HEK293 (cell line): ENCODE measurements at regions of chr3 and their contacts with region 1.

Region 1: GRCh38 chr3:77254967-77255831 is 215.3 kb downstream of the ROBO2 start:
- H3K4me3 ChIP-seq: no peak overlapping the region
- H3K27ac ChIP-seq: no peak overlapping the region
- H3K4me1 ChIP-seq: peaks cover 6% of the 10 kb centered on the region; the same call in 1 of the 2 replicates
- CTCF ChIP-seq: 0 out of 2 replicates have a peak, but pooled peaks have one; percentile 15

Region 2: GRCh38 chr3:77038468-77038929 is 216.7 kb before region 1 on chr3:
- CTCF ChIA-PET with region 1: interaction called, 16 read pairs
- POLR2A ChIA-PET with region 1: no interaction called
- H3K4me3 ChIP-seq: peak overlapping the region; percentile 55
- H3K27ac ChIP-seq: peak overlapping the region; percentile 93
- H3K4me1 ChIP-seq: no peaks in the 10 kb centered on the region
- CTCF ChIP-seq: peak; percentile 55; the same call in 1 of the 2 replicates

Region 3: DNA sequence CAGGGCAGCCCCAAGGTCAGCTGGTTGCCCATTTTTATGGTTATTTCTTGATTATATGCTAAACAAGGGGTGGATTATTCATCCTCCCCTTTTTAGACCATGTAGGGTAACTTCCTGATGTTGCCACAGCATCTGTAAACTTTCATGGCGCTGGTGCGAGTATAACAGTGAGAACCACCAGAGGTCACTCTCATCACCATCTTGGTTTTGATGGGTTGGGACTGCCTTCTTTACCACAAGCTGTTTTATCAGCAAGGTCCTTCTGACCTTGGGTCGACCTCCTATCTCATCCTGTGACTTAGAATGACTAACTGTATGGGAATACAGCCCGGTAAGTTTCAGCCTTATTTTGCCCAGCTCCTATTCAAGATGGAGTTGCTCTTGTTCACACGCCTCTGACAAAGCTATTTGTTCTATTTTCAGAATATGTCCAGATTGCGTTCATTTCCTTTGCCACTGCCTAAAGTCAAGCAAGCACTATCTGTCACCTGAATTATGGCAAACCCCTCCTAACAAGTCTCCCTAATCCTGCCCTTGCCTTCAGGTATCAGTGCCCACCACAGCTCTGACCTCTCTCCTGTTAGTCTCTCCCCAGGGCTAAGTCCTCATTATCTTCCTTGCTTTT is 93.1 kb after region 1 on chr3:
- CTCF ChIA-PET with region 1: no interaction called
- POLR2A ChIA-PET with region 1: no interaction called
- H3K4me3 ChIP-seq: no peak overlapping the region
- H3K27ac ChIP-seq: no peak overlapping the region
- H3K4me1 ChIP-seq: no peaks in the 10 kb centered on the region
- CTCF ChIP-seq: no peak